Panc1 (cell line): ENCODE measurements at regions of chr4 and their contacts with region 1.

Region 1: GRCh38 chr4:172202480-172203076 is 389.4 kb downstream of the GALNTL6 start:
- DNase-seq: peak; percentile 10
- ATAC-seq: no peak
- H3K4me3 ChIP-seq: no peak overlapping the region
- H3K27ac ChIP-seq: no peak overlapping the region
- H3K4me1 ChIP-seq: no peaks in the 10 kb centered on the region
- H3K27me3 ChIP-seq: no peaks in the 10 kb centered on the region
- CTCF ChIP-seq: peak; percentile 58; the same call in 1 of the 2 replicates

Region 2: GRCh38 chr4:171846232-171846631 is 356.3 kb before region 1 on chr4:
- CTCF ChIA-PET with region 1: no interaction called
- POLR2A ChIA-PET with region 1: no interaction called
- in situ Hi-C with region 1: no loop called
- intact Hi-C with region 1: loop called (anchors 10 kb)
- DNase-seq: peak; percentile 5
- ATAC-seq: no peak
- H3K4me3 ChIP-seq: no peak overlapping the region
- H3K27ac ChIP-seq: no peak overlapping the region
- H3K4me1 ChIP-seq: no peaks in the 10 kb centered on the region
- H3K27me3 ChIP-seq: no peaks in the 10 kb centered on the region
- CTCF ChIP-seq: peak; percentile 44

Region 3: DNA sequence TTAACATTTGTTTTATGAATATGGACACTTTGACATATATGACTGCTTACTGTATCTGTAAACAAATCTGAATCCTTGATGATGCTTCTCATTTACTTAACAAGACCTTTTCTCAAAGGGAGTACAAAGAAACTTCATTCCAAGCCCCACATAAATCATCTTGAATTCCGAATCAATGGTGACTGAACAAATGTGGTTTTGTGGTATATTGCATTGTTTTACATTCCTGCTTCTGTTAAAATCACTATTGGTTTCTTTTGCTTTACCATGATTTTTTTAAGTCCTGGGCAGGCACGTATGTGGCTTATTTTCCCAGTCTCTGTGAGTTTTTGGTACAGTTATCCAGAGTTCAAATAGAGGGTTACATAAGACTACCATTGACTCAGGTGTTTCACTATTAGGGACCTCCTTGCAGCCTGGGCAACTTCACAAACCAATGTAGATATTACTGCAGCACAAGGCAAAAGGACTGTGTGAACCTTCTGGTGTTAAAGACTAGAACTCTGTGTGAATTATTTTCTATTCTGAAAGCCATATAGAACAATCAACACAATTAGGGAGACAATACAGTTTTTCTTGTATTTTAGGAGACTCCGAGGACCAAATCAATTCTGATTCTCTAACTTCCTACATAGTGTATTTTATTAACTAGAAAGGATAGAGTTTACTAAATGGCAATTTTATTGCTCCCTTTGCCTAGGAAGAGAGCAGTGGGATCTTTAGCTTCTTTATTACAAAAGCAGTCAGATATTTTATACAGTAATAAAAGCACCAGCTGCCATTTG is 192.9 kb before region 1 on chr4:
- CTCF ChIA-PET with region 1: no interaction called
- POLR2A ChIA-PET with region 1: no interaction called
- in situ Hi-C with region 1: no loop called
- intact Hi-C with region 1: no loop called
- DNase-seq: no peak
- ATAC-seq: no peak
- H3K4me3 ChIP-seq: no peak overlapping the region
- H3K27ac ChIP-seq: no peak overlapping the region
- H3K4me1 ChIP-seq: no peaks in the 10 kb centered on the region
- H3K27me3 ChIP-seq: no peaks in the 10 kb centered on the region
- CTCF ChIP-seq: no peak

Region 4: GRCh38 chr4:172245516-172245915 is 42.9 kb after region 1 on chr4:
- CTCF ChIA-PET with region 1: no interaction called
- POLR2A ChIA-PET with region 1: no interaction called
- in situ Hi-C with region 1: no loop called
- intact Hi-C with region 1: no loop called
- DNase-seq: no peak
- ATAC-seq: no peak
- H3K4me3 ChIP-seq: no peak overlapping the region
- H3K27ac ChIP-seq: no peak overlapping the region
- H3K4me1 ChIP-seq: no peaks in the 10 kb centered on the region
- H3K27me3 ChIP-seq: no peaks in the 10 kb centered on the region
- CTCF ChIP-seq: no peak

Region 5: DNA sequence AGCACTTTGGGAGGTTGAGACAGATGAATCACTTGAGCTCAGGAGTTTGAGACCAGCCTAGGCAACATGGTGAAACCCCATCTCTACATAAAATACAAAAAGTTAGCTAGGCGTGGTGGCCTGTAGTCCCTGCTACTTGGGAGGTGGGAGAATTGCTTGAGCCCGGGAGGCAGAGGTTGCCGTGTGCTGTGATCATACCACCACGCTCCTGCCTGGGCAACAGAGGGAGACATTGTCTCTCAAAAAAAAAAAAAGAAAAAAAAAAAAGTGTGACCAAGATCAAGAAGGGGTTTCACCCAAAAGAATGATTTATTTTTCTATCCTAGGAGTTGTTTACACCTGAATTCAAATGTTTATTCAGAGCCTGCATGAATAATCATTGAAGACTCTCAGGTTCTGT is 393.6 kb after region 1 on chr4:
- CTCF ChIA-PET with region 1: no interaction called
- POLR2A ChIA-PET with region 1: no interaction called
- in situ Hi-C with region 1: no loop called
- intact Hi-C with region 1: no loop called
- DNase-seq: no peak
- ATAC-seq: no peak
- H3K4me3 ChIP-seq: no peak overlapping the region
- H3K27ac ChIP-seq: no peak overlapping the region
- H3K4me1 ChIP-seq: no peaks in the 10 kb centered on the region
- H3K27me3 ChIP-seq: no peaks in the 10 kb centered on the region
- CTCF ChIP-seq: no peak